ENCODE measurements at regions of chr10 and their contacts with region 1.

Region 1: DNA sequence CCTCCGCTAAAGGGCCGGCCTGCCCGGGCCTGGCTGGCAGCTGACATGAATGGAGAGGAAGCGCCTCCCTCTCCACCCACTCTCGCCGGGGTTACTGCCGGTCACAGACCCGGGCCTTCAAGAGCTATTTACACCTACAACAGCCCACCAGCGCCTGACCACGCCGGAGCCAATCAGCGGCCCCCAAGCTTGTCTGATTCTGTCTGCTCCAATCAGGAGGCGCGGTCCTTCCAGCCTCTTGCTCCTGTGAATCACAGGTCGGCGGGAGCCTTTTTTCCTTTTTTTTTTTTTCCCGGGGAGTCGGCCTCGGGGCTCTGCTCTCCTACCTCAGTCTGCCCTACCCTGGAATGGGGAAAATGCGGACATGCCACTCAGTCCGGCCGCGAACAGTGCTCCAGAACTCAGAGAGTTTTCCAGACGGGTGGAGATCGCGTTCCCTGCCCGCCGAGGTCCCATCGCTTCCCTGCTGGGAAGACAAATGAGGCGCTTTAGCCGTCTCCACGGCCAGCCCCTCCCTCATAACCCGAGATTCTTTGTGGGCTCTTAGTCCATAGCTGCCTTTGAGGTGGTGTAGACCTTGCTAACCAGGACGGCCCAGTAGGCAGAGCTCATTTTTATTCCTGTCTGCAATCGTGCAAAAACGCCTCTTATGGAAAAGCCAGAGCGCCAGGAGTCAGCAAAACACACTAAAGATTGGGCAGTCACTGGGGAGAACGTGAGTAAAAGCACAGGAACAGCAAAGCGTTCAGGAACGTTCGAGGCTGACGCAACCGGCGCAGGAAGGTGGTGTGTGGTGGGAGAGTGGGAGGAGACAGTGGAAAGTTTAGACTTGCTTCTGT is 26.5 kb downstream of the SCD start:
- DNase-seq: peak; percentile 96
- H3K4me3 Mint-ChIP-seq: no peak overlapping the region
- H3K27ac Mint-ChIP-seq: no peak overlapping the region
- H3K4me1 Mint-ChIP-seq: peaks cover 39% of the 10 kb centered on the region
- H3K27me3 Mint-ChIP-seq: no peaks in the 10 kb centered on the region

Region 2: GRCh38 chr10:99711129-99711719 is 662.3 kb before region 1 on chr10:
- intact Hi-C with region 1: no loop called
- DNase-seq: peak; percentile 81
- H3K4me3 Mint-ChIP-seq: no peak overlapping the region
- H3K27ac Mint-ChIP-seq: no peak overlapping the region
- H3K4me1 Mint-ChIP-seq: peaks cover 6% of the 10 kb centered on the region
- H3K27me3 Mint-ChIP-seq: no peaks in the 10 kb centered on the region

Region 3: GRCh38 chr10:99732033-99732912 is 641.2 kb before region 1 on chr10 and contains the starts of genes COX15 and CUTC:
- intact Hi-C with region 1: loop called (anchors 5 kb)
- DNase-seq: peak; percentile 99
- H3K4me3 Mint-ChIP-seq: peak within 1 kb of the TSS; percentile 98
- H3K27ac Mint-ChIP-seq: peak within 1 kb of the TSS; percentile 98
- H3K4me1 Mint-ChIP-seq: peaks cover 26% of the 10 kb centered on the region
- H3K27me3 Mint-ChIP-seq: no peaks in the 10 kb centered on the region
- total RNA-seq, gene COX15: 40.7 and 41.1 TPM in 2 replicates
- total RNA-seq, gene CUTC: 43.1 and 46.8 TPM in 2 replicates

Region 4: DNA sequence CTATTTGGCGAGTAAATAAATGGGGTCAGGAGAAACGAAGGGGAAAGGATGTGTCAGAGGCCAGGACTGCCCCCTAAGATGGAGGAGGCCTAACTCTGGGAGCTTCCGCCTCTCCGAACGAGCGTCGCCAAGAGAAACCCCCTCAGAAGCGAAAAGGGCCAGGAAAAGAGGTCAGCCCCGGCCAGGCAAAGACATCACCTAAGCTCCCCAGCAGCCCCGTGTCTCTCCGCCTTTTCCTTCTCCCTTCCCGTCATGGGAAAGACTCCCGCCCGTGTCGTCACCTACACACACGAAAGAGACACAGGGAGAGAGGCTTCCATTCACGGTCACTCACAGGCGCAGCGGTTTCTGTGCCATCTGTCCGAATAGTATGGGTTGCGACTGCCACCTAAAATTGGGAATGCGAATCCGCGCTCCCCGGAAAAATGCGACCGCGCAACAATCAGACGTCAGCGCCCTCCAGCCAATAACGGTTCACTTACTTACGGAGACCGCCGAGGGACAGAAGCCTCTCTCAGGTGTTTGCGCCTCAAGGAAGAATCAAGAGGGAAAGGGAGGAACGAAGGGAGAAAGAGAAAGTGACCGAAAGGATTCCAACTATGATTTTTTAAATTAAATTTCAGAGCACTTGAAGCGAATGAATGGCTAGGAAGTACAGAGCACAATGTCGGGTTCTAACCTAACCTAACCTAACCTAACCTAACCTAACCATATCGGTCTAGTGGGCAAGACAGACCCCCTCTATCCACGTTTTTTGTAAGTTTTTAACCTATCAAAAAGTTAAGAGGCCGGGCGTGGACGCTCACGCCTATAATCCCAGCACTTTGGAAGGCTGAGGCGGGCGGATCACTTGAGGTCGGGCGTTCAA is 106.0 kb before region 1 on chr10 and contains the start of gene CWF19L1:
- intact Hi-C with region 1: loop called (anchors 2 kb)
- DNase-seq: peak; percentile 94
- H3K4me3 Mint-ChIP-seq: peak within 1 kb of the TSS; percentile 99
- H3K27ac Mint-ChIP-seq: peak within 1 kb of the TSS; percentile 98
- H3K4me1 Mint-ChIP-seq: peaks cover 15% of the 10 kb centered on the region
- H3K27me3 Mint-ChIP-seq: no peaks in the 10 kb centered on the region
- total RNA-seq, gene CWF19L1: 45.2 and 47.2 TPM in 2 replicates

Region 5: DNA sequence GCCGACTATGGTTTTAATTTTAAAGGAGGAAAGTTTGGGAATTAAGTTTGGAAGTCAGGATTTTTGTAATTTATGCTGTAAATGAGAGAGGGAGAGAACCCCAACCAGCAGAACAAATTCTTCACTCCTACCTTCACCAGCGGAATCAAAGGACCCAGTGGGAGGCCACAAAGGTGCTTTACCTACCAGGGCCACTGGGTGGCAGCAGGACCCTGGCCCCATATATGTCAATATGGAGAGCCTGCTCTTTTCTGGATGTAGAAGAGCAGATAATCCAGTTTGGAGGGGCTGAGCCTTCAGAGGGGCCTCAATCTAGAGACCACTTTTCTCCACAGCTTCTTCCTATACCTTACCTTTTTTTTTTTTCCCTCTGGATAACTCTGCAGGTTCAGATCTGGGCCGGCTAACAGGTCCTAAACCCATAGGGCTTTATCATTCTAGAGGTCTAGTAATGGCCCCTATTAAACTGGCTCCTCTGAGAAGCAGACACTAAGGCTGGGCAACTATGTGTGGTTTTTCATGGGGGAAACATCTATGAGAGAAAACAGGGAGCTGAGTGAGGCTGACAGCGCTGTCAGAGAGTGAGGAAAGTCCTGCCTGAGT is 35.0 kb before region 1 on chr10:
- intact Hi-C with region 1: loop called (anchors 1 kb)
- DNase-seq: peak; percentile 95
- H3K4me3 Mint-ChIP-seq: no peak overlapping the region
- H3K27ac Mint-ChIP-seq: peak overlapping the region; percentile 27
- H3K4me1 Mint-ChIP-seq: peaks cover 24% of the 10 kb centered on the region
- H3K27me3 Mint-ChIP-seq: peaks cover 12% of the 10 kb centered on the region

Region 6: DNA sequence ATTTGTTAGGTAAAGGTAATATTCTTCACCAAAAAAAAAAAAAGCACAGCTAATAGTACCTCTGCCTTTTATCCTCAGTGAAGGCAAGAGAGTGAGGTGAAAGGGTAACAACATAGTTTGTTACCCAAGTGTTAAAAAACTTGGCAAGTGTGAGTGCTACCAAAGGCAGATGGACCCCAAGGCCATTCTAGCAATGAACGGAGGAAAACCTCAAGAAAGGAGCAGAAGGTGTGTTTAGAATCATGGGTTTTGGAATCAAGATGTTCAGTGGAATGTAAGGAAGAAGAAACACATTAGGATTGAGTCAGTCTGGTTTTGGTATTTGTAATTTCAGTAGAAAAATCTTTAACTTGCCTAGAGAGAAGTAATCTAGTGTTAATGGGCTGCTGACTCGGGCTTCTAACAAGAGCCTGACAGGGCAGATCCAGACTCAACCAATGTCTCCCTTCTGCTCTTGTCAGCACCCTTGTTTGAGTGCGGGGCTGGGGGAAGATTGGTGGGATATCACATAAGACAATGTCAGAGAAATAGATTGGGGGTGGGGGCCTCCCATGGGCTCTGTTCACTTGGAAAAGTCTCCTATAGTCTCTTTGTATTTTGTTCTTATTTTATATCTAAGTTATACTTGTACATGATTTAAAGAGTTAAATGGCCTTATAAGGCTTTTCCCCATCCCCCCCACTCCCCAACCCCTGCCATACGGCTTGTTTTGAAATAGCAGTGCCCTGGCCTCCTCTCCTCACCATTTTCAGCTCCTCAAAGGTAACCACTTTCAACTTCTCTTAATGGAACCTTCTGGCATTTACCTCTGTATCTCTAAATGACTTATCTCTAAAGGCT is 17.9 kb after region 1 on chr10:
- intact Hi-C with region 1: loop called (anchors 2 kb)
- DNase-seq: no peak
- H3K4me3 Mint-ChIP-seq: no peak overlapping the region
- H3K27ac Mint-ChIP-seq: no peak overlapping the region
- H3K4me1 Mint-ChIP-seq: peaks cover 13% of the 10 kb centered on the region
- H3K27me3 Mint-ChIP-seq: no peaks in the 10 kb centered on the region

Region 7: GRCh38 chr10:100508691-100509150 is 135.2 kb after region 1 on chr10:
- intact Hi-C with region 1: loop called (anchors 1 kb)
- DNase-seq: peak; percentile 90
- H3K4me3 Mint-ChIP-seq: peak overlapping the region; percentile 80
- H3K27ac Mint-ChIP-seq: peak overlapping the region; percentile 89
- H3K4me1 Mint-ChIP-seq: peaks cover 91% of the 10 kb centered on the region
- H3K27me3 Mint-ChIP-seq: no peaks in the 10 kb centered on the region

Measured in activated CD4-positive, alpha-beta T cell treated with anti-CD3 and anti-CD28 coated beads, Interleukin-2, amount 10 ng/mL, durations not matched to agents 24 days and 14 days (primary cell).